Mammary epithelial cell (primary cell): ENCODE measurements at regions of chr22 and their contacts with region 1.

Region 1: GRCh38 chr22:32020117-32020516 is 22.9 kb upstream of the SLC5A1 start:
- DNase-seq: peak; percentile 100
- H3K4me3 ChIP-seq: no peak overlapping the region
- H3K27ac ChIP-seq: peak overlapping the region; percentile 79
- H3K4me1 ChIP-seq: peaks cover 19% of the 10 kb centered on the region
- H3K27me3 ChIP-seq: no peaks in the 10 kb centered on the region
- CTCF ChIP-seq: no peak

Region 2: DNA sequence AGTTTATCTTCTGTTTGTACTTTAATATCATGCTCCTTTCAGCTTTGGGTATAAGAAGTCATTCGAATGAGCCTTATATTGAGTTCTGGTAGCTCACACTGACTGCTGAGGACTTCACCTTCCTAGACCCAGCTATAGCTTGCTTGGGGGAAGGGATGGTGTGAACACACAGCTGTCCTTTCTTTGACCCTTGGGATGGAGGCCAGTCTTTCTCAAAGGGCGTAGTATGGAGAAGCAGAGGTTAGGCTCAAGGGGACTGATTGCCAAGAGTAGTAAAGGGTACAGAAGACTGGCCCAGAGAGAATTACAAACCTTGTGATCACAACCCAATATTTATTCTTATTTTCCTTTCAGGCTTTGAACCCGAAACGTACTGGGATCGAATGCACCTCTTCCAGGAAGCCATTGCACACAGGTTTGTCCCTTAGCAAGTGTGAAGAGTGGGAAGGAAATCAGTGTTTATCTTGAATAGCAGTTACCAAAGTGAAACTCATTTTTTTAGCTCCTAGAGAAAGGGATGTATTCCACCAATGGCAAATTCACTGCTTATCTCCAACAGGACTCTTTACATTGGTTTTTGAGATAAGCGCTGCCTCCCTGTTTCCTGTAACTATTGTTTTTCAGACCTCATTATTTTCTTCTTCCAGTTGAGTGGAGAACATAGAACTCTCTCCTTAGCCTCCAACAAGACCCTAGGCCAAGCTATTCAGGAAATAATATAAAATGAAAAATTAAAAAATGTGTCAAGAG is 118.6 kb before region 1 on chr22:
- CTCF ChIA-PET with region 1: no interaction called
- dilution Hi-C with region 1: no loop called
- in situ Hi-C with region 1: no loop called
- intact Hi-C with region 1: no loop called
- DNase-seq: no peak
- H3K4me3 ChIP-seq: no peak overlapping the region
- H3K27ac ChIP-seq: no peak overlapping the region
- H3K4me1 ChIP-seq: no peaks in the 10 kb centered on the region
- H3K27me3 ChIP-seq: no peaks in the 10 kb centered on the region
- CTCF ChIP-seq: no peak

Region 3: DNA sequence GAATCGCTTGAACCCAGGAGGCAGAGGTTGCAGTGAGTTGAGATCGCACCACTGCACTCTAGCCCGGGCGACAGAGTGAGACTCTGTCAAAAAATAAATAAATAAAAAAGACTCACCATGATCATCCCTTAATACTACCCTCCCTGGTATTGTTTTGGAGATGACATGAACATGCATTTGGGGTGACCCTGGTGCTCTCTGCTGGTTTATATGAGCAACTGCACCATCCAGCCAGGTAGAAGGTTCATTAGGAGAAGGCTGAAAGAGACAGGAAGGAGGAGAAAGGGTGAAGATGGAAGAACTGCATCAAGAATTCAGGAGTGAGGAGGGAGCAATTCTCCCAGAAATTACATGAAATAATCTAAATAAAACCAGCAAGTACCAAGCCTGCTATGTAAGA is 60.8 kb after region 1 on chr22:
- CTCF ChIA-PET with region 1: no interaction called
- dilution Hi-C with region 1: no loop called
- in situ Hi-C with region 1: no loop called
- intact Hi-C with region 1: loop called (anchors 2 kb)
- DNase-seq: peak; percentile 66
- H3K4me3 ChIP-seq: no peak overlapping the region
- H3K27ac ChIP-seq: no peak overlapping the region
- H3K4me1 ChIP-seq: peaks cover 12% of the 10 kb centered on the region
- H3K27me3 ChIP-seq: no peaks in the 10 kb centered on the region
- CTCF ChIP-seq: peak; percentile 89 to 93